Common myeloid progenitor, CD34-positive (primary cell): ENCODE measurements at regions of chr17 and their contacts with region 1.

Region 1: GRCh38 chr17:47872021-47872650 is 21.2 kb upstream of the SP6 start:
- DNase-seq: no peak
- H3K4me3 ChIP-seq: peak overlapping the region in 2 of 7 experiments; percentile 32 to 37
- H3K27ac ChIP-seq: no peak overlapping the region
- H3K4me1 ChIP-seq: peaks cover 0 to 29% (median 18%) of the 10 kb centered on the region in 4 experiments
- H3K27me3 ChIP-seq: peaks cover 0 to 42% (median 19%) of the 10 kb centered on the region in 5 experiments

Region 2: DNA sequence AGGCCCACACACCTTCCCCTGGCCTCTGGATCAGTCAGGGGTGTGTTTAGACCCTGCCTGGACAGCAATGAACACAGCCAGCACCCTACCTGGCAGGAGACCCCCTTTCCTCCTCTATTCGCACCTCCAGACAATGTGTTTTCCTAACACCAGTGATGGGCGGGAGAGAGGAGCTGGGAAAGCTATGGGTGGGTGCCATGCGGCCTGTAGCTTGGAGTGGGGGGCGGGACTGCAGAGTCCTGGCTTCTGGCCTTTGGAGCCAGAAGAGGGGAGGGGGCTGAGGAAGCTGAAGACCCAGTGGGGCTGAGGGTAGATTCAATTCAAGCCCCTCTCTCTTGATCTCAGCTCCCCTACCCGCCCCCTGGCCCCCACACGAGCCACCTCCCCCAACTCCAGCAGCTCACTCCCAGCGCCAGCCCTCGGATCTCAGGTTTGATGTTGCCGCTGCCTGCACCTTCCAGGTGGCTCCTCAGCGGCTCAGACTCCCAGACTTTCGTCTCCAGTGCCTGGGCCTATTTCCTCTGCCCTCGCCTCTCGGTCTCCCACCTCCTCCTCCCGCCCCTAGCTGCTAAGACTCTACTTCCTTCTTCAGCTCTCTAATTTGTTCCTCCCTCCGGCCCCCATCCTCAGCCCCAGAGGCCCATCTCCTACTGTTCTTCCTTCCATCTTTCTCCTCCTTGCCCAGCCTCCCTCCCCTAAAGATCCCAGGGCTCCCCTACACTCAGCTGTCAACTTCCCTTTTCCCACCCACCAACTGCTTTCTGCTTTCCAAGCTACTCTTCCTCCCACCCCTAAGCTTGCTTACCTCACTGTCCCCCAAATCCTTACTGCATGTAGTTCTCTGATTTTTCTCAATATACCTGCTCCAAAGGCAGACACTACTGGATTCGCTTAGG is 14.3 kb before region 1 on chr17:
- CTCF ChIA-PET with region 1: interaction called, 11 read pairs
- POLR2A ChIA-PET with region 1: no interaction called
- DNase-seq: no peak
- H3K4me3 ChIP-seq: no peak overlapping the region
- H3K27ac ChIP-seq: no peak overlapping the region
- H3K4me1 ChIP-seq: peaks cover 0 to 9% (median 6%) of the 10 kb centered on the region in 4 experiments
- H3K27me3 ChIP-seq: peaks cover 0 to 32% (median 23%) of the 10 kb centered on the region in 5 experiments

Region 3: DNA sequence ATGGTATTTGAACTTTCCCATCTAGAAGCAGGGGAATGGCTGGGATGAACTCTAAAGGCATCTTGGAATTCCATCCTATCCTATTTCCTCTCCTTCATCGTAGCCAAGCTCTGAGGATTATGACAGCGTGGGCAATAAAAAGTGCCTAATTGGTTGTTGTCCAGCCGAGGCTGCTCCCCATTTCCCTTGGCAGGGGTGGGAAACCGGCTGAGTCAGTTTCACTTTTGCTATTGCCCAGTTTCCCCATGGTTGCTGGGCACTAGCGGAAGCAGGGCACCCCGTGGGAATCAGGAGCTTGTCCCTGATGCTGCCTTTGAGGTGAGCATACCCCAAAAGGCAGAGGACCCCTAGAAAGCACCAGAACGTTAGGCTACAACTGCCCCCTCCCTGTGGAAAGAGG is 10.1 kb after region 1 on chr17:
- CTCF ChIA-PET with region 1: interaction called, 10 read pairs
- POLR2A ChIA-PET with region 1: no interaction called
- DNase-seq: peak; percentile 20 to 60 (median 53)
- H3K4me3 ChIP-seq: peak overlapping the region in 4 of 7 experiments; percentile 17 to 59 (median 38)
- H3K27ac ChIP-seq: no peak overlapping the region
- H3K4me1 ChIP-seq: peaks cover 2 to 21% (median 14%) of the 10 kb centered on the region in 4 experiments
- H3K27me3 ChIP-seq: no peaks in the 10 kb centered on the region

Region 4: GRCh38 chr17:47915776-47916398 is 43.8 kb after region 1 on chr17:
- CTCF ChIA-PET with region 1: no interaction called
- POLR2A ChIA-PET with region 1: no interaction called
- DNase-seq: no peak
- H3K4me3 ChIP-seq: no peak overlapping the region
- H3K27ac ChIP-seq: no peak overlapping the region
- H3K4me1 ChIP-seq: peaks cover 0 to 8% (median 6%) of the 10 kb centered on the region in 4 experiments
- H3K27me3 ChIP-seq: no peaks in the 10 kb centered on the region